Psoas muscle (tissue), 8 donors: ENCODE measurements at regions of chr12 and their contacts with region 1.

Region 1: DNA sequence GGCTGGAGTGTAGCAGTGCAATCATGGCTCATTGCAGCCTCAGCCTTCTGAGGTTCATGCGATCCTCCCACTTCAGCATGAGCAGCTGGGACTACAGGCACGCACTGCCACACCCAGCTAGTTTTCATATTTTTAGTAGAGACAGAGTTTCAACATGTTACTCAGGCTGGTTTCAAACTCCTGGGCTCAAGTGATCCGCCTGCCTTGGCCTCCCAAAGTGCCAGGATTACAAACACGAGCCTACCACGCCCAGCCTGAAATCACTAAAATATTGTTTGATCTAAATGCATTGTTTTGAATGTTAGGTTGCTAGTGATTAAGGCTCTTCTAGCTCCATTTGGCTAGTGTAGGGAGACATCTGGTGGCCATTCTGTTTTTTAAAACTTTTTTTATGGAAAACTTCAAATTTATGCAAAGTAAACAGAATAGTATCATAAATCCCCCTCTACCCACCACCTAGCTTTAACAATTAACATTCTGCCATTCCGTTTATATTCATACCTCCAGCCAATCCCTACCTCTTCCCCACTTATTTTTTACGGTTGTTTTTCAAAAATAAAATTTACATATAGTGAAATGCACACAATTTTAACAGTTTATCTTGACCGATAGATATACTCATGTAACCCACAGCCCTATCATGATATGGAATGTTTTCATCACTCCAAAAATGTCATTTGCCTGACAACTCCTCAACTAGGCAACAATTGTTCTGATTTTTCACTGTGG is 37.8 kb downstream of the MYO1H start:
- DNase-seq: peak; percentile 29 to 61
- ATAC-seq: peak in 2 of 4 donors; percentile 72 to 91
- H3K4me3 ChIP-seq: no peak overlapping the region
- H3K27ac ChIP-seq: no peak overlapping the region
- H3K4me1 ChIP-seq: no peaks in the 10 kb centered on the region
- H3K27me3 ChIP-seq: peaks cover 0 to 5% (median 2%) of the 10 kb centered on the region in 3 donors
- CTCF ChIP-seq: peak; percentile 53

Region 2: GRCh38 chr12:109264095-109264942 is 121.2 kb before region 1 on chr12:
- intact Hi-C with region 1: loop called in 1 of 2 experiments (anchors 2 kb)
- DNase-seq: peak; percentile 78 to 87
- ATAC-seq: peak; percentile 61 to 79 (median 66)
- H3K4me3 ChIP-seq: no peak overlapping the region
- H3K27ac ChIP-seq: peak overlapping the region; percentile 55
- H3K4me1 ChIP-seq: no peaks in the 10 kb centered on the region
- H3K27me3 ChIP-seq: no peaks in the 10 kb centered on the region
- CTCF ChIP-seq: peak; percentile 66

Region 3: DNA sequence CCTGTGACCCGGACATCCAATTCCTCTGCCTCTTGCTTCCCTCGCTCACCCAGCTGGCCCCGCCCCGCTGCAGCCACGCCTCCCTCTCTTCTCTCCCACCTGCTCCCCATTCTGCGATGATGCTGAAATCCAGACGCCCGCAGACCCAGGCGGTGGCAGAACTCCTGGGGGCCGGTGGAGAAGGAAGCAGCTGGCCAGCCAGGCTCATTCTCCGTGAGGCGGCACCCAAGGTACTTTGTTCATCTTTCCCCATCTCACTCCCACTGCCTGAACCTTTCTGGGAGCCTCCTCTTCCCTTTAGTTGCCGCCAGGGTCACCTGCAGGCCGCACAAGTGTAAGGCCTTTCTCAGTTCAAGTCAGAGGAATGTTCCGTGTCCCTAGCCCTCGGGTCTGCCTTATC is 112.1 kb before region 1 on chr12:
- intact Hi-C with region 1: loop called in 1 of 2 experiments (anchors 5 kb)
- DNase-seq: no peak
- ATAC-seq: peak in 3 of 4 donors; percentile 3 to 11 (median 4)
- H3K4me3 ChIP-seq: no peak overlapping the region
- H3K27ac ChIP-seq: no peak overlapping the region
- H3K4me1 ChIP-seq: no peaks in the 10 kb centered on the region
- H3K27me3 ChIP-seq: no peaks in the 10 kb centered on the region
- CTCF ChIP-seq: no peak

Region 4: GRCh38 chr12:109291521-109292341 is 93.8 kb before region 1 on chr12:
- intact Hi-C with region 1: no loop called
- DNase-seq: peak in 1 of 2 donors; percentile 70
- ATAC-seq: peak; percentile 49 to 81 (median 56)
- H3K4me3 ChIP-seq: peak overlapping the region; percentile 55
- H3K27ac ChIP-seq: no peak overlapping the region
- H3K4me1 ChIP-seq: peaks cover 4% of the 10 kb centered on the region
- H3K27me3 ChIP-seq: peaks cover 0 to 3% (median 0%) of the 10 kb centered on the region in 3 donors
- CTCF ChIP-seq: no peak

Region 5: GRCh38 chr12:109440851-109441493 is 55.5 kb after region 1 on chr12:
- intact Hi-C with region 1: no loop called
- DNase-seq: no peak
- ATAC-seq: no peak
- H3K4me3 ChIP-seq: no peak overlapping the region
- H3K27ac ChIP-seq: no peak overlapping the region
- H3K4me1 ChIP-seq: no peaks in the 10 kb centered on the region
- H3K27me3 ChIP-seq: no peaks in the 10 kb centered on the region
- CTCF ChIP-seq: no peak

Region 6: GRCh38 chr12:109685574-109686447 is 300.3 kb after region 1 on chr12:
- intact Hi-C with region 1: no loop called
- DNase-seq: no peak
- ATAC-seq: no peak
- H3K4me3 ChIP-seq: no peak overlapping the region
- H3K27ac ChIP-seq: no peak overlapping the region
- H3K4me1 ChIP-seq: no peaks in the 10 kb centered on the region
- H3K27me3 ChIP-seq: no peaks in the 10 kb centered on the region
- CTCF ChIP-seq: no peak